ENCODE measurements at regions of chr6 and their contacts with region 1.

Region 1: GRCh38 chr6:83067448-83068413 is at the start of gene DOP1A:
- DNase-seq: peak; percentile 86 to 91
- ATAC-seq: peak; percentile 85 to 90
- H3K4me3 ChIP-seq: peak within 1 kb of the TSS; percentile 83 to 96 (median 90)
- H3K27ac ChIP-seq: peak within 1 kb of the TSS; percentile 86 to 94 (median 89)
- H3K4me1 ChIP-seq: peaks cover 24 to 38% of the 10 kb centered on the region in 2 donors
- H3K27me3 ChIP-seq: no peaks in the 10 kb centered on the region
- CTCF ChIP-seq: peak; percentile 87 to 97 (median 92)
- POLR2A ChIP-seq: peak; percentile 62 to 68
- total RNA-seq, gene DOP1A: 12.4 to 30.9 (median 16.2) TPM

Region 2: GRCh38 chr6:83038246-83038645 is 29.5 kb before region 1 on chr6:
- in situ Hi-C with region 1: no loop called
- intact Hi-C with region 1: no loop called
- DNase-seq: no peak
- ATAC-seq: no peak
- H3K4me3 ChIP-seq: no peak overlapping the region
- H3K27ac ChIP-seq: no peak overlapping the region
- H3K4me1 ChIP-seq: no peaks in the 10 kb centered on the region
- H3K27me3 ChIP-seq: no peaks in the 10 kb centered on the region
- CTCF ChIP-seq: no peak
- POLR2A ChIP-seq: no peak

Region 3: GRCh38 chr6:83113258-83113657 is 45.5 kb after region 1 on chr6:
- in situ Hi-C with region 1: no loop called
- intact Hi-C with region 1: loop called (anchors 2 kb)
- DNase-seq: no peak
- ATAC-seq: no peak
- H3K4me3 ChIP-seq: no peak overlapping the region
- H3K27ac ChIP-seq: no peak overlapping the region
- H3K4me1 ChIP-seq: peaks cover 12% of the 10 kb centered on the region in 2 donors
- H3K27me3 ChIP-seq: no peaks in the 10 kb centered on the region
- CTCF ChIP-seq: no peak
- POLR2A ChIP-seq: no peak

Region 4: GRCh38 chr6:83183082-83183828 is 115.5 kb after region 1 on chr6:
- in situ Hi-C with region 1: loop called in 1 of 4 experiments (anchors 10 kb)
- intact Hi-C with region 1: no loop called
- DNase-seq: no peak
- ATAC-seq: no peak
- H3K4me3 ChIP-seq: no peak overlapping the region
- H3K27ac ChIP-seq: no peak overlapping the region
- H3K4me1 ChIP-seq: no peaks in the 10 kb centered on the region
- H3K27me3 ChIP-seq: no peaks in the 10 kb centered on the region
- CTCF ChIP-seq: no peak
- POLR2A ChIP-seq: no peak

Region 5: GRCh38 chr6:83192871-83193746 is 125.4 kb after region 1 on chr6 and contains the starts of genes PGM3 and RWDD2A:
- in situ Hi-C with region 1: loop called in 2 of 4 experiments (anchors 10 kb)
- intact Hi-C with region 1: no loop called
- DNase-seq: peak; percentile 79 to 81
- ATAC-seq: peak; percentile 95 to 97
- H3K4me3 ChIP-seq: peak within 1 kb of the TSS; percentile 83 to 96 (median 87)
- H3K27ac ChIP-seq: peak within 1 kb of the TSS; percentile 80 to 90 (median 86)
- H3K4me1 ChIP-seq: peaks cover 6 to 9% of the 10 kb centered on the region in 2 donors
- H3K27me3 ChIP-seq: no peaks in the 10 kb centered on the region
- CTCF ChIP-seq: no peak
- POLR2A ChIP-seq: peak; percentile 70 to 73
- total RNA-seq, gene PGM3: 3.9 to 13.2 (median 8.8) TPM
- total RNA-seq, gene RWDD2A: 0.61 to 1.9 (median 1.2) TPM

Region 6: DNA sequence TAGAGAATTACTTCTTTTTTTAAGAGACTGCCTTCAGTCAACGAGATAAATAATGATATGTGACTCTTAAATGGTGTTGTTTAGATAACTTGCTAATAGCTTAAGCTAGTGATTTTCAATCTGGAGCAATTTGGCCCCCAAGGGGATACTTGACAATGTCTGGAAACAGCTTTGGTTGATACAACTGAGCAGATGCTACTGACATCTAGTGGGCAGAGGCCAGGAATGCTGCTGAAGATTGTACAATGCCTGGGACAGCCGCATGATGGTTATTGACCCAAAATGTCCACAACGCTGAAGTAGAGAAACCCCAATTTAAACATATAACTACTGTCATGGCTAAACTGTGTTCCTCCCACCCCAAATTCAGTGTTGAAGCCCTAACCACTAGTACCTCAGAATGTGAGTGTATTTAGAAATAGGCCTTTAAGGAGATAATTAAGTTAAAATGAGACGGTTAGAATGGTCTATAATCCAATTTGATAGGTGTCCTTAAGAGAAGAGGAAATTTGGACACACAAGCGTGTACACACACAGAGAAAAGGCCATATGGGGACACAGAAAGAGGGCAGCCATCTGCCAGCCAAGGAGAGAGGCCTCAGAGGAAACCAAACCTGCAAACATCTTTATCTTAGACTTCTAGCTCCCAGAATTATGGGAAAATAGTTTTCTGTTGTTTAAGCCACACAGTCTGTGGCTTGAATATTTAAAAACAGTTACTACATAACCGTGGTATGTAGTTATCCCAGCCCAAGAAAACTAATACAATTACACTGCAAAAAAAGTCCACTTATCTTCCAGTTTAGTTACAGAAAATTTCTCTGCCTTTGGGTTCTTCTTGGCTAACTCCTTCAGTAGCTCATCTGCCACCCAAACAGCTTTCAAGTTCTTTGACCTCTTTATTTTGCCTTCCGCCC is 147.7 kb after region 1 on chr6:
- in situ Hi-C with region 1: no loop called
- intact Hi-C with region 1: loop called (anchors 1 kb)
- DNase-seq: peak; percentile 17 to 40
- ATAC-seq: peak; percentile 83 to 86
- H3K4me3 ChIP-seq: no peak overlapping the region
- H3K27ac ChIP-seq: no peak overlapping the region
- H3K4me1 ChIP-seq: peaks cover 7% of the 10 kb centered on the region in 2 donors
- H3K27me3 ChIP-seq: no peaks in the 10 kb centered on the region
- CTCF ChIP-seq: peak in 4 of 5 experiments; percentile 40 to 76 (median 58)
- POLR2A ChIP-seq: no peak

Region 7: GRCh38 chr6:83514866-83515466 is 447.2 kb after region 1 on chr6:
- in situ Hi-C with region 1: loop called in 1 of 4 experiments (anchors 25 kb)
- intact Hi-C with region 1: loop called (anchors 5 kb)
- DNase-seq: no peak
- ATAC-seq: peak in 1 of 2 donors; percentile 44
- H3K4me3 ChIP-seq: no peak overlapping the region
- H3K27ac ChIP-seq: no peak overlapping the region
- H3K4me1 ChIP-seq: peaks cover 11 to 16% of the 10 kb centered on the region in 2 donors
- H3K27me3 ChIP-seq: no peaks in the 10 kb centered on the region
- CTCF ChIP-seq: peak; percentile 60 to 79 (median 74)
- POLR2A ChIP-seq: no peak

Region 8: DNA sequence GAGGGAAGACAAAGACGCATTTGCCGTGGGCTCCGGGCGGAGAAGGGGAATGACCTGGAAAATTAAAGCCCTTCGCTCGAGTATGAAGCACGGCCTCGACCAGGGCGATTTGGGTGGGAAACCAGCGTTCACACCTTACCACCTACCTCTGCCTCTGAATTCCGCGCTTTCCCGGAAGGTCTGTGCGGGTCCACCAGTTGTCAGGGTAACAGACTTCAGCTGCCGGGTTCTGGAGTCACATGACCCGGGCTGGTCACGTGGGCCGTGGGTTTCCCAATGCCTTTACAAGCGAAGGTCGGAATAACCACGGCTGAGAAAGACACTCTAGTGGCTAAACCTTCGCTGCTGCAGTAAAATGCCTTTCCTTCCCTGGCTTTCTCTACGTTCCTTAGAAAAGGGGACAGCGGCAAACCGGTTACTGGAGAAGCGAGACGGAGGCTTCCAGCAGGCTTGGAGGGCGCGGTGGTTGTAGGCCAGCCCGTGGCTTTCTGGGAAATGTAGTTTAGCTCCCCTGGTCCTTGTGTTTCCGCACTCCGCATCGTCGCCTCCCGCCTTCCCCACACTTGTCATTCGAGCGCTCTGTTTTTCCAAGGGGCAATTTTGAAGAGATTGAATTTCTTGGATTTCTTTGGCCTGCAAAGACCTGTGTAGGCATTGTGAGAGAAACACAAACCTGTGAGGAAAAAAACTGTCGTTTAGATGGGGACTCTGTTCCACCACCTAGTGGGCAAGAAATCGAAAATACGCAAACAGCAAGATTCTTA is 1159.9 kb after region 1 on chr6 and contains the start of gene CEP162:
- in situ Hi-C with region 1: no loop called
- intact Hi-C with region 1: loop called (anchors 10 kb)
- DNase-seq: peak; percentile 81 to 85
- ATAC-seq: peak; percentile 97 to 99
- H3K4me3 ChIP-seq: peak within 1 kb of the TSS; percentile 84 to 94 (median 90)
- H3K27ac ChIP-seq: peak within 1 kb of the TSS; percentile 81 to 95 (median 92)
- H3K4me1 ChIP-seq: peaks cover 0 to 12% of the 10 kb centered on the region in 2 donors
- H3K27me3 ChIP-seq: no peaks in the 10 kb centered on the region
- CTCF ChIP-seq: peak; percentile 41 to 74 (median 58)
- POLR2A ChIP-seq: no peak
- total RNA-seq, gene CEP162: 1.9 to 4.4 (median 3.2) TPM

Measured in gastrocnemius medialis (tissue), 4 donors.